ENCODE measurements at regions of chr4 and their contacts with region 1.

Region 1: DNA sequence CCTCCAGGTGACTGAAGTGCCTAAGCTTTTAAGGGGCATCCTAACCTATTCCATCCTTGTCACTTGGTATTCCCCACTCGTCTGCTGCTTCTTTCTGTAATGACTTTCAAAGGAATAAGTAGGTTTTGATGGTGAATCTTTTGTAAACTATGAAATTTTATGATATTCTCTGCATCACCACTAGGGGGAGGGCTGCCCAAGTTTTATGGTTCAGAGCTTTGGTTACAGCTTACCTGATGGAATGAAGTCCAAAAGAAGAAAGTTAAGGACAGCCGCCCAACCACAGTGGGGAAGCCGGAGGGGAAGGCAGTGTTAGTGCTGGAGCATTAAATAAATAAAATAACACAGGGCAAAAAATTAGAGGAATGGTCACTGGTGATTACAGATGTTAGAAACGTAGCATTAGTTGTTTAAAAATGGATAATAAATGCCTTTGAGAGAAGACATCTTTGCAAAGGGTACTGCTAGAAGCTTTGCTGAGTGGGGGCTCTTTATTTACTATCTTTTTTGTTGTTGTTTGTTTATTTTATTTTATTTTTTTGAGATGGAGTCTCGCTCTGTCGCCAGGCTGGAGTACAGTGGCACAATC is 204.9 kb downstream of the GBA3 start:
- DNase-seq: no peak
- ATAC-seq: peak; percentile 76
- H3K4me3 ChIP-seq: no peak overlapping the region
- H3K27ac ChIP-seq: no peak overlapping the region
- H3K4me1 ChIP-seq: no peaks in the 10 kb centered on the region
- H3K27me3 ChIP-seq: no peaks in the 10 kb centered on the region; a peak in 1 of 4 replicates
- CTCF ChIP-seq: peak; percentile 63 to 70 (median 64)
- EP300 ChIP-seq: no peak
- POLR2A ChIP-seq: no peak
- RAD21 ChIP-seq: peak; percentile 60

Region 2: DNA sequence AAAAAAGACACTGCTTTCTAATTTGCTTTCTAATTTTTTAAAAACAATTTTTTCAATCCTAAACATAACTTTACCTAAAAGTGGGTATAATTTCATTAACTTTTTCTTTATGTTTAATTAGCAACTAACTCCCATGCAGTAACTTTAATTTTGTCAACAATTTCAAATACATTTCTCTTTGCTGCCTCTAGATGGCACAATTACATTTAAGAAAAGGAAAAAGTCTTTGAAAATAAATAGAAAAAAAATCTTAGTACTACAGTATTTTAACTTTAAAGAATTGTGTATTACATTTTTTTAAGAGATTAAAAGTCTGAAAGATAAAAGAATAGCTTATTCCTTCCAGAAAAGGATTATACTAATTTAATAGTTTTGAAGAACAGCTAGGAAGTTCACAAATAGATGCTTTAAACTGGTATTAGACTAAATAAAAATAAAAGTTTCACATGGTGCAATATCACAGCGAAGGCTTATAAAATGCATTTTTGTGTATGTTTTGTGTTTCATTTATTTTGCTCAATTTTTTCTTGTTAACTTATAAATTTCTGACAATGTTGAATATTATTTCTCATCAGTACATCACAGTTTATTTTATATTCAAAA is 486.9 kb before region 1 on chr4:
- CTCF ChIA-PET with region 1: interaction called, 13 read pairs
- POLR2A ChIA-PET with region 1: no interaction called
- RAD21 ChIA-PET with region 1: interaction called, 3 read pairs
- SMC1A ChIA-PET with region 1: interaction called, 4 read pairs
- in situ Hi-C with region 1: no loop called
- intact Hi-C with region 1: no loop called
- DNase-seq: no peak
- ATAC-seq: no peak
- H3K4me3 ChIP-seq: no peak overlapping the region
- H3K27ac ChIP-seq: no peak overlapping the region
- H3K4me1 ChIP-seq: no peaks in the 10 kb centered on the region
- H3K27me3 ChIP-seq: no peaks in the 10 kb centered on the region
- CTCF ChIP-seq: peak in 2 of 3 experiments; percentile 31 to 46; a peak in 4 of 6 replicates
- EP300 ChIP-seq: no peak
- POLR2A ChIP-seq: no peak
- RAD21 ChIP-seq: peak; percentile 34; the same call in 1 of the 2 replicates

Region 3: DNA sequence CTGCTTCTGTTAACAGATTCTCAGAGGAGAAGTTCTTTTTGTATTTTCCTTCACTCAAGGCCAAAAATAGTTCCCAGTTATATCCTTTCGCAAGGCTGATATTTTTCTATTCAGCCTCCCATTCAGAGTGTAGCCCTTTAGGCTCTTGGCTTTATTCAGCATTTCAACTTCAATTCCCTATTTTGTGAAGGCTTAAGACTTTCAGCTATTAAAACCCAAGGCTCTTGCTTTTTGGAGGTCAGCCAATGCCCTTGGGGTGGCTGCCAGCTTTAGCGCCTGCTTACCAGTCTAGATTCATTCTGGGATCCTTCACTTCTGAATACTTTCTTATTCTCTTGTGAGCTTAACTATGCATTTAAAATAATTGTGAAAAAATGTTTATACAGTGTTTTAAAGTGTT is 324.4 kb before region 1 on chr4:
- CTCF ChIA-PET with region 1: no interaction called
- POLR2A ChIA-PET with region 1: no interaction called
- RAD21 ChIA-PET with region 1: no interaction called
- SMC1A ChIA-PET with region 1: no interaction called
- in situ Hi-C with region 1: no loop called
- intact Hi-C with region 1: no loop called
- DNase-seq: no peak
- ATAC-seq: no peak
- H3K4me3 ChIP-seq: no peak overlapping the region
- H3K27ac ChIP-seq: no peak overlapping the region
- H3K4me1 ChIP-seq: no peaks in the 10 kb centered on the region
- H3K27me3 ChIP-seq: no peaks in the 10 kb centered on the region
- CTCF ChIP-seq: no peak
- EP300 ChIP-seq: no peak
- POLR2A ChIP-seq: no peak
- RAD21 ChIP-seq: no peak

Region 4: DNA sequence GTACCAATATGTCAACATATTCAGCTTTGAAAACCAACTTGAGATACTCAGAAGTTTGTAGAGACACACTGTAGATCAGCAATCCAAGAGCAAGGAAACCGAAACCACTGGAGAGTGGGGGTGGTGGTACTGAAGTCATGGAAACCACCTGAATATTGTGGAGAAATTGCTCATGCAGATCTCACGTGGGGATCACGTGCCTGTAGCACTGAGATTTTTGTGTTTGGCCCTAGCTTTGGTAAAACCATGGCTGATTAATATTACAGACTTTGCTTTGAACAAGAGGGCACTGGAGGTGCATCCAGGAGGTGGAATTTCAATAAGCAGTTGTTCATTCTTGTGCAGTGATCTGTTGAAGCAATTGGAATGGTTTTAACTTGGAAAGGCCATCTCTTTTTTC is 157.6 kb before region 1 on chr4:
- CTCF ChIA-PET with region 1: interaction called, 8 read pairs
- POLR2A ChIA-PET with region 1: no interaction called
- RAD21 ChIA-PET with region 1: interaction called, 11 read pairs
- SMC1A ChIA-PET with region 1: interaction called, 15 read pairs
- in situ Hi-C with region 1: no loop called
- intact Hi-C with region 1: no loop called
- DNase-seq: no peak
- ATAC-seq: peak; percentile 8
- H3K4me3 ChIP-seq: no peak overlapping the region
- H3K27ac ChIP-seq: no peak overlapping the region
- H3K4me1 ChIP-seq: no peaks in the 10 kb centered on the region
- H3K27me3 ChIP-seq: no peaks in the 10 kb centered on the region
- CTCF ChIP-seq: no peak
- EP300 ChIP-seq: no peak
- POLR2A ChIP-seq: no peak
- RAD21 ChIP-seq: no peak

Region 5: DNA sequence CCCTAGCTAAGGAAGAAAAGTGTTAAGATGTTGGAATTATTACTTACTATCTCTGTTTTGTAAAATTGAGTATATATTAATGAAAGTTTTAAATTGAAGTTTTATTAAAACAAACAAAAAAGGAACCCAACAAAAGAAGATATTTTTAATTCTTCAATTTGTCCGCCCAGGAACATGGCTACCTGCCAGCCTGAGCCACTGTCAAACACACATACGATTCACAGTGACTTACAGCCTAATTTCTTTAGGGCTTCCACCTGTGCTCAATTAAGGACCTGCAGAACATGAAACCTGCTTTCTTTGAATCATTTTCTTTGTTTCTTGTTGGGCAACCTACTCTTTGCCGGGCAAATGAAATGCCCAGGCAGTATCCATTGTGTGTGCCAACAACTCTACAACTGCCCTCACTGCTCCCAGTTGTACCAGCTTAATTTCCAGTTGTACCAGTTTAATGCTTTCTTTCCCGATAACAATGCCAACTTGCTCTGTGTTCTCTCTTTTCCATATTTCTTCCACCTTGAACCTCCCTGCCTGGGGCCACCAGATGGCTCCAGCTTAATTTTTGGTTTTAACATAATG is 23.2 kb before region 1 on chr4:
- CTCF ChIA-PET with region 1: interaction called, 23 read pairs
- POLR2A ChIA-PET with region 1: interaction called, 3 read pairs
- RAD21 ChIA-PET with region 1: no interaction called
- SMC1A ChIA-PET with region 1: interaction called, 4 read pairs
- in situ Hi-C with region 1: no loop called
- intact Hi-C with region 1: no loop called
- DNase-seq: no peak
- ATAC-seq: no peak
- H3K4me3 ChIP-seq: no peak overlapping the region
- H3K27ac ChIP-seq: no peak overlapping the region
- H3K4me1 ChIP-seq: no peaks in the 10 kb centered on the region
- H3K27me3 ChIP-seq: no peaks in the 10 kb centered on the region
- CTCF ChIP-seq: no peak
- EP300 ChIP-seq: no peak
- POLR2A ChIP-seq: no peak
- RAD21 ChIP-seq: no peak

Region 6: DNA sequence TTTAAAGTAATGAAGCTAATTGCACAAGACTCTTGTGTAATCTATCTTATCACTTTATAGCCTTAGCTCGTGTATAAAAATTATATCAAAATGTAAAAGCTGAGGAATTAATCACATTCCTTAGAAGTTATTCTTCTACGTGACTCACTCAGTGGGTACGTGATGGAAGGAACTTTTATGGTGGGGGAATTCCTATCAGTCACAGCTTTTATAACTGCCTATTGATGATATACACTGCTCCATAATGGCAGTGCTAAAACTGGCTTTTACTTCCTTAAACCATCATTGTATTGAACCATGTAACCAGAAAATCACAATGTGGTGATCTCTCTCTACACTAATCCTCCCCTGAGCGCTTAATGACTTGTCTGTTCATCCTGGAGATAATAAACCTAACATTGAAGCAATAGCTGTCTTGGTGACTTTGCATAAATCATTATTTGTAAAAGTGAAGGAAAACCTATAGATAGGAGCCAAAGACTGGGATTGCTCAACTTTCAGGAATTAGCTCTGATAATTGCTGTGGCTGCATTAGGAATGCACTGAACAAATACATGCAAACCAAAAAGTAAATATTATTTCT is 71.8 kb after region 1 on chr4:
- CTCF ChIA-PET with region 1: interaction called, 15 read pairs
- POLR2A ChIA-PET with region 1: no interaction called
- RAD21 ChIA-PET with region 1: no interaction called
- SMC1A ChIA-PET with region 1: interaction called, 3 read pairs
- in situ Hi-C with region 1: no loop called
- intact Hi-C with region 1: no loop called
- DNase-seq: no peak
- ATAC-seq: no peak
- H3K4me3 ChIP-seq: no peak overlapping the region
- H3K27ac ChIP-seq: no peak overlapping the region
- H3K4me1 ChIP-seq: no peaks in the 10 kb centered on the region
- H3K27me3 ChIP-seq: no peaks in the 10 kb centered on the region
- CTCF ChIP-seq: no peak
- EP300 ChIP-seq: no peak
- POLR2A ChIP-seq: no peak
- RAD21 ChIP-seq: no peak

Region 7: GRCh38 chr4:23130845-23131244 is 233.2 kb after region 1 on chr4:
- CTCF ChIA-PET with region 1: interaction called, 14 read pairs
- POLR2A ChIA-PET with region 1: no interaction called
- RAD21 ChIA-PET with region 1: interaction called, 18 read pairs
- SMC1A ChIA-PET with region 1: interaction called, 10 read pairs
- in situ Hi-C with region 1: no loop called
- intact Hi-C with region 1: loop called (anchors 10 kb)
- DNase-seq: no peak
- ATAC-seq: peak; percentile 68
- H3K4me3 ChIP-seq: no peak overlapping the region
- H3K27ac ChIP-seq: no peak overlapping the region
- H3K4me1 ChIP-seq: no peaks in the 10 kb centered on the region
- H3K27me3 ChIP-seq: no peaks in the 10 kb centered on the region
- CTCF ChIP-seq: 0 out of 6 replicates have a peak, but pooled peaks of 1 of the 3 experiments have one; percentile 5
- EP300 ChIP-seq: no peak
- POLR2A ChIP-seq: no peak
- RAD21 ChIP-seq: no peak

Region 8: GRCh38 chr4:23614284-23614892 is 716.8 kb after region 1 on chr4:
- CTCF ChIA-PET with region 1: interaction called, 11 read pairs
- POLR2A ChIA-PET with region 1: no interaction called
- RAD21 ChIA-PET with region 1: no interaction called
- SMC1A ChIA-PET with region 1: interaction called, 8 read pairs
- in situ Hi-C with region 1: no loop called
- intact Hi-C with region 1: no loop called
- DNase-seq: no peak
- ATAC-seq: peak; percentile 91
- H3K4me3 ChIP-seq: no peak overlapping the region
- H3K27ac ChIP-seq: no peak overlapping the region
- H3K4me1 ChIP-seq: no peaks in the 10 kb centered on the region
- H3K27me3 ChIP-seq: no peaks in the 10 kb centered on the region
- CTCF ChIP-seq: no peak; a peak in 1 of 6 replicates
- EP300 ChIP-seq: no peak
- POLR2A ChIP-seq: no peak
- RAD21 ChIP-seq: peak; percentile 47